ENCODE measurements at regions of chr18 and their contacts with region 1.

Region 1: GRCh38 chr18:76922107-76922506 is 99.8 kb downstream of the ZNF236 start:
- DNase-seq: peak; percentile 45
- H3K4me3 Mint-ChIP-seq: no peak overlapping the region
- H3K27ac Mint-ChIP-seq: peak overlapping the region; percentile 40
- H3K4me1 Mint-ChIP-seq: peaks cover 16% of the 10 kb centered on the region
- H3K27me3 Mint-ChIP-seq: no peaks in the 10 kb centered on the region

Region 2: DNA sequence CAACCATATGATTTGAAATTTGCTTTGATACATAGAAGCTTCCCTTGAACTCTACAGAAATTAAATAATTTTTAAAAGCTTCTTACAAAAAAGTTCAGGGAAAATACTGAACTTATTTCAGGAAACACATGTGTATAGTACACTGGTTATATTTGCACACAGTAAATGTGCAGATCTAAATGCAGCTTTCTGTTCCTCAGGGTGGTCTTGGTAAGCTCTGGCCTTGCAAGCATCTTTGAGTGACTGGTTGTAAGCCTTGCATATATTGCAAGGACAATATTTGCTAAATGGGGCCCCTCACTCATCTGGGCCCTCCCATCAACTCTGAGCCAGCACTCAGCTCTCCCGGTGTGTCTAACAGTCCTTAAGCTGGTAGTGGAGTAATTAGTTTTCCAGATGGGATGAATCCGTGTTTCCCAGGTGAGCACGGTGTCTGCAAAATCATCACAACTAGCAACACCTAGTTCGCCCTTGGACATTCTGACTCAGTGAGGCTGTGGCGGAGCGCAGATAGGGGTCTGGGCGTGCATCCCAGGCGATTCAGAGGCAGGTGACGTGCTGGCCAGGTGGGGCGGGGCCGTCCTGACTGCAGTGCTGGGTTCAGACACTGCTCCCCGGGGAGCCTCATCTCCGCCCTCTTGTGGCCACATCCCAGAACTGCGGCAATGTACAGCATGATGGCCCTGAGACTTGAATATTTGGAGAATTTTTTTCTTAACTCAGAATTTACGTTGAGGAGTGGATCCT is 60.9 kb after region 1 on chr18:
- intact Hi-C with region 1: loop called (anchors 1 kb)
- DNase-seq: peak; percentile 77
- H3K4me3 Mint-ChIP-seq: no peak overlapping the region
- H3K27ac Mint-ChIP-seq: no peak overlapping the region
- H3K4me1 Mint-ChIP-seq: peaks cover 10% of the 10 kb centered on the region
- H3K27me3 Mint-ChIP-seq: peaks cover 2% of the 10 kb centered on the region

Region 3: DNA sequence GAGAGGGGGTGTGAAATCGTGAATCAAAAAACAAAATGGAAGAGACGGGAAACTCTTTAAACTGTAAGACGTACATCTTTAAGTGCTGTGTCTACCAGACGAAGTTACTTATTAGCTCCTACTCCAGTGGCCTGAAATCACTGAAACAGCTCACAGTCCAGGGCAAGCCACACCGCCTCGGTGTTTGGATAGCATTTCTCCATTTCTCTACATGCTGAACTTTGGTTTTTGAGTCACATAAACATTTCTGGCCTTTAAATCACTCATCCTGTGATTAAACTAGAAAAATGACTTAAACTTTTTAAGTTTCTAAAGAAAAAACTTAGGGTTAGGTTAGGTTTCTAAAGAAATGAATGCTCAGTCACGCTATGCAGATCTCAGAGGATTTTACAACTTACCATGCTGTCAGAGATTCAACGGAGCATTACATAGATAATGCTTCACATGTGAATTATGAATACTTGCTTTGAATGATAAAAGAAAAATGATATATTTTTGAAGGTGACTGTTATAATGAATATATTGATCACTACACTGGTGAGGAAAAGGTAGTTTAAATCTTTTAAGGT is 72.1 kb after region 1 on chr18:
- intact Hi-C with region 1: no loop called
- DNase-seq: no peak
- H3K4me3 Mint-ChIP-seq: no peak overlapping the region
- H3K27ac Mint-ChIP-seq: no peak overlapping the region
- H3K4me1 Mint-ChIP-seq: no peaks in the 10 kb centered on the region
- H3K27me3 Mint-ChIP-seq: peaks cover 9% of the 10 kb centered on the region

Region 4: GRCh38 chr18:77061946-77062517 is 139.9 kb after region 1 on chr18:
- intact Hi-C with region 1: loop called (anchors 5 kb)
- DNase-seq: peak; percentile 37
- H3K4me3 Mint-ChIP-seq: peak overlapping the region; percentile 76
- H3K27ac Mint-ChIP-seq: peak overlapping the region; percentile 97
- H3K4me1 Mint-ChIP-seq: peaks cover 85% of the 10 kb centered on the region
- H3K27me3 Mint-ChIP-seq: no peaks in the 10 kb centered on the region

Region 5: DNA sequence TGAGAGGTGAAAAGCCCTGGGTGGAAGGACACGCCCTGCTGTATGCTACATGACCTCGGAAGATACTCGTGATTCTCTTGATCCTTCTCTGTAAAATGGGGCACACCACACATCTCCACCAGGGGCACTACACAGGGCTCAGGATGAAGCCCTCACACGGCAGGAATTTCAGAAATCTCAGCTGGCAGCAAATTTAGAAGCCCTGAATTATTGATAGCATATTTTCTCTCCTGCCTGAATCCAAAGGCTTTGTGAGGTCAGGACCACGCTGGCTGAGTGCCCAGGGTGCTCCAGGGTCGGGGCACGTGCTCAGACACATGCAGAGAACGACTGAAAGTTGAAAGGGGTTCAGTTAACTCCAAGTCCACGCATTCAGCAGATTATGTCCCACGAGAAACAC is 285.4 kb after region 1 on chr18:
- intact Hi-C with region 1: loop called (anchors 1 kb)
- DNase-seq: no peak
- H3K4me3 Mint-ChIP-seq: peak overlapping the region; percentile 28
- H3K27ac Mint-ChIP-seq: no peak overlapping the region
- H3K4me1 Mint-ChIP-seq: peaks cover 45% of the 10 kb centered on the region
- H3K27me3 Mint-ChIP-seq: no peaks in the 10 kb centered on the region

Region 6: GRCh38 chr18:77650799-77651385 is 728.8 kb after region 1 on chr18:
- intact Hi-C with region 1: loop called (anchors 1 kb)
- DNase-seq: peak; percentile 41
- H3K4me3 Mint-ChIP-seq: no peak overlapping the region
- H3K27ac Mint-ChIP-seq: no peak overlapping the region
- H3K4me1 Mint-ChIP-seq: peaks cover 4% of the 10 kb centered on the region
- H3K27me3 Mint-ChIP-seq: peaks cover 9% of the 10 kb centered on the region

Region 7: GRCh38 chr18:78632111-78632541 is 1710.0 kb after region 1 on chr18:
- intact Hi-C with region 1: no loop called
- DNase-seq: no peak
- H3K4me3 Mint-ChIP-seq: no peak overlapping the region
- H3K27ac Mint-ChIP-seq: no peak overlapping the region
- H3K4me1 Mint-ChIP-seq: no peaks in the 10 kb centered on the region
- H3K27me3 Mint-ChIP-seq: no peaks in the 10 kb centered on the region

Measured in activated T-helper 1 cell treated with anti-CD3 and anti-CD28 coated beads, Interleukin-12 subunit alpha, Interleukin-12 subunit beta, Interleukin-2, Interleukin-4 antibody, amounts not matched to agents 30 ng/mL and 10 ng/mL and 1 ng/mL, durations not matched to agents 14 hours and 24 hours and 36 hours (primary cell).